ENCODE measurements at regions of chr20 and their contacts with region 1.

Region 1: DNA sequence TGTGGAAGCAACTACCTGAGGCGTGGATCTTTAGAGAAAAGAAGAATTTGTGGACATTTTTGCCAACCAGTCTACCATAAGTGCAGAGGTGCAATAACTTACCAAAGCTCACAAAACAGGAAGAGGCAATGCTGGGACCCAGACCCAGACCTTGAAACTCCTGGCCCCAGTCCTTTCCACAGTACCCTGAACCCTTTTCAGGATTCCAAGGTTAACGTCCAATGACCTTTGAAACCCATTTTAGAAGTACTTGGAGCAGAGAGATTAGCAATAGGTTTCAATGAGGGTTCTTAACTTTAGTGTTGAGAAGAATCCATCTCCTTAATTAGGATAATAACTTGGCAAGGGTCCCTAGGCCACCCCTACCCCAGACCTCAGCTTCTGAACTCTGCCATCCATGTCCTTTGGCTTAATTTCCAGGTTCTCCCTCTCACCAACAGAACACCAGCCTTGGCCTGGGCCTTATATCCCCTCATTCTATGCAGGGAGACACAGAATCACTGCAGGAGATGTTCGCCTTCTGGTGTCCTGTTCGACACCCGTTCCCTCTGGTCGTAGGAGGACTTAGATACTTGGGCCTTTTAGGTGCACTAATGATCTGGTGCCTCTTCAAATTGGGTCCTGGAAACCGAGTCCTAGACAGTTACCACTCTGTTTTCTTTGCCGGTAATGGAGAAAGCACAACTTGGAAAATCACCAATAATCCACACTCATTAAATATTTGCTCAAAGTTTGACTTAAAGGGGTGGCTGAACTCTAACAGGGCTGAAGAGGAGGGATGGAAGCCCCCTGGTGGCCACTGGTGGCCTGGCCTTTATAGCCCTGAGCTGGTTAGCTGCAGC is 40.6 kb downstream of the ISM1 start:
- DNase-seq: peak; percentile 47
- H3K4me3 Mint-ChIP-seq: no peak overlapping the region
- H3K27ac Mint-ChIP-seq: no peak overlapping the region
- H3K4me1 Mint-ChIP-seq: peaks cover 11% of the 10 kb centered on the region
- H3K27me3 Mint-ChIP-seq: no peaks in the 10 kb centered on the region

Region 2: DNA sequence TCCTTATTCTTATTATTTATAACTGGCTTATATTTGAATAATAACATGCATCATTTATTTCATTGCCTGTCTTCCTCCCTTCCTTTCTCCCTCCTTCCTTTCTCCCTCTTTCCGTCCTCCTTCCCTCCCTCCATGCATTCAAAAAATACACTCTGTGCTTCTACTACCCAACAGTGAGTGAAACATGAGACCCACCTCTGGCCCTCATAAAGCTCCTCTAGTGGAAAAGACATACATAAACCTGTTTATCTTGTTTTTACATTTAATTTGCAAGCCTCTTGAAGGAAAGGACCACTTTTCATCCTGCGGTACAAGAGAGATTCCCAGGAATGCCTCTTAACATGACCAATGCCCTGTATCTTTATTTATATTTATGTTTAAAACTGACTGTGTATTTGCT is 62.4 kb before region 1 on chr20:
- intact Hi-C with region 1: no loop called
- DNase-seq: no peak
- H3K4me3 Mint-ChIP-seq: no peak overlapping the region
- H3K27ac Mint-ChIP-seq: no peak overlapping the region
- H3K4me1 Mint-ChIP-seq: no peaks in the 10 kb centered on the region
- H3K27me3 Mint-ChIP-seq: peaks cover 5% of the 10 kb centered on the region

Region 3: DNA sequence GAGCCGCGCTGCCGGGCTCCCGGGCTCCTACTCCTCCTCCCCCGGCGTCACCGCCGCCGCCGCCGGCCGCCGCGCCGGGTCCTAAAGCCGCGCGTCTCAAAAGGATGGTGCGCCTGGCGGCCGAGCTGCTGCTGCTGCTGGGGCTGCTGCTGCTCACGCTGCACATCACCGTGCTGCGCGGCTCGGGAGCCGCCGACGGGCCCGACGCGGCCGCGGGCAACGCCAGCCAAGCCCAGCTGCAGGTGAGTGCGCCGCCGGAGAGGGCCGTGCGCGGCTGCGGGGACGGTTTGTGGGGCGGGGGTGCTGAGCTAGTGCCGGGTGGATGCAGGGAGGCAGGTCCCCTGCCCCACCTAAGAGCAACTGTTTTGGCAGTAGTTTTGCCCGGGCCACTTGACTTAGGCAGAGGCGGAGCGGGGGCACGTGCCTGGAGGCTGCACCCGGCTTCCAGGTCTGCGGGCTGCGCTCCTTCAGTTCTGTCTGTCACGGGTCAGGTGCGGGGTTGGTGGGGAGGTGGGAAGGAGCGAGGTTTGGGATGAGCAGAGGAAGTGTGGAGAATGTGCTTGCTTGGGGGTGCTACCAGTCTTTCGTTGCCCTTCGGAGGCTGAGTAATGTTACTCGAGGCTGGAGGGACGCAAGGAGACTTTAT is 39.9 kb before region 1 on chr20:
- intact Hi-C with region 1: loop called (anchors 2 kb)
- DNase-seq: peak; percentile 69
- H3K4me3 Mint-ChIP-seq: peak overlapping the region; percentile 85
- H3K27ac Mint-ChIP-seq: peak overlapping the region; percentile 39
- H3K4me1 Mint-ChIP-seq: peaks cover 19% of the 10 kb centered on the region
- H3K27me3 Mint-ChIP-seq: peaks cover 52% of the 10 kb centered on the region

Region 4: DNA sequence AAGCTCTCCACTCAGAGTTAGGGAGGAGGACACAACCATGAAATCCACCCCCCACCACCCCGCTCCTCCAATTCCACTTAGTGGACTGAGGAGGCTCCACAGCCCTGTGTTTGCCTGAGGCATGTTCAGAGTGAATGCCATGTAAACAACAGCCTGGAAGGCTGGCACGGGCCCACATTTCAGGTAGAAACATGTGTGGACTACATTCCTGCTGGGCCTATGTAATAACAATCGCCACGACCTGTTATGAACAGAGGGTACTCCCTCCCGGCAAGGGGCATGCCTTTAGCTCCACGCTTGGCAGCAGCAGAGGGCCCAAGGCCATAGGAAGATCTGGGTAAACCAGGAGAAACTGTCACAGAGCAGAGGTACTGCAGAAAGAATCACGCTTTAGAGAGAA is 24.9 kb after region 1 on chr20:
- intact Hi-C with region 1: no loop called
- DNase-seq: no peak
- H3K4me3 Mint-ChIP-seq: no peak overlapping the region
- H3K27ac Mint-ChIP-seq: no peak overlapping the region
- H3K4me1 Mint-ChIP-seq: no peaks in the 10 kb centered on the region
- H3K27me3 Mint-ChIP-seq: no peaks in the 10 kb centered on the region

Region 5: DNA sequence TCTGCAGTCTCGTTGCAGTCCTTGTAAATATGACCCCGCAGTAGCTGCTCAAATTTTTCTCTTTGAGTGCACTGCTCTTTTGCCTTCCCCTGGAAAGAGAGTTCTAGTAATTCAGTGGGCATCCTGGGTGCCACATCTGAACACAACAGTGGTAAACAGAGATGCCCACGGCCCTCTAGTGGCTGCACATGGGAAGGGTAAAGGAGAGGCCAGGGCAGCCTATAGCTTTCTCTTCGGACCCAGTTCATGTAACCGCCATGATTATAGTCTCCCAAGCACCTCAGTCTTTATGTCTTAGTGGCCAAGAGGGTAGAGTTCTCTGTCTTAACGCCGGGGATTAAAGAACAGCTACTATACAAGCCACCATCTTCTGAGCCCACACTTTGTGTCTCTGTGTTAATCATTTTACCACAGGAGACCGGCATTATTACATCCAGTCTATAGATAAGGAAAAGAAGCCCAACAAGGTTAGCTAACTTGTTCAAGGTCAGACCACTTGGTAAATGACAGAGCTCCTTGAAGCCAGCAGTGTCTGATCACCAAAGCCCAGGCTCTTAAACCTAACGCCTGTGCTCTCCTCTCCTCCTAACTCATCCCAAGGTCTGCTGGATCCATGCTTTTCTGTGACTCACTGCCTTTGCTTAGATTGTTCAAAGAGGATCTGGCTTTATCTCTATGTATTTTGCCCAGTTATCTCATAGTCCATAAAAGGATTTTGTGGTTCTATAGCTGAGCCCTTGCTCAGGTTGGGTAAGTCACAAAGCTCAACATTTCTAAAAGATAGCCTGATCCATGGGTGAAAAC is 41.2 kb after region 1 on chr20:
- intact Hi-C with region 1: loop called (anchors 5 kb)
- DNase-seq: peak; percentile 21
- H3K4me3 Mint-ChIP-seq: no peak overlapping the region
- H3K27ac Mint-ChIP-seq: no peak overlapping the region
- H3K4me1 Mint-ChIP-seq: no peaks in the 10 kb centered on the region
- H3K27me3 Mint-ChIP-seq: no peaks in the 10 kb centered on the region

Region 6: DNA sequence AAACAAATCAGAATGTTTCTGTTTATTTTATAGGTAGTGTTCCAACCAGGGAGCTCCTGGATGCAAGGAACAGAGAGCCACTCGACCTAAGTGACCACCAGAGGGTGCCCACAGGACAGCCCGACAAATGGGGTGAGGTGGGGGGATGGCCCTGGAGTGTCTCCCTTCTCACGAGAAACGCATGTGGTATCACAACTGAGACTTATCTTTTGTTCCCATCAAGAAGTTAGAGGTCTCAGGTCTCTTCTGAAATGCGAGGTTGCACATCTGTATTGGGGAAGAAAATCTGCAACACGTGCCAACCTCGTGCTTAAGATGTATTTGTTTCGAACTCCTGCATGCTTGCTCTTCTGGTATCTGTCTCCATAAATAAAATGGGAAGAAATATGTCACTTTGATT is 63.4 kb after region 1 on chr20:
- intact Hi-C with region 1: no loop called
- DNase-seq: no peak
- H3K4me3 Mint-ChIP-seq: no peak overlapping the region
- H3K27ac Mint-ChIP-seq: peak overlapping the region; percentile 18
- H3K4me1 Mint-ChIP-seq: peaks cover 26% of the 10 kb centered on the region
- H3K27me3 Mint-ChIP-seq: peaks cover 1% of the 10 kb centered on the region

Measured in activated T-helper 2 cell treated with anti-CD3 and anti-CD28 coated beads, Interferon-gamma antibody, Interleukin-2, Interleukin-4, amounts not matched to agents 10 μg/mL and 5 μg/mL and 100 μg/mL, durations not matched to agents 14 hours and 24 hours and 36 hours (primary cell).